Heart right ventricle (tissue), 16 donors: ENCODE measurements at regions of chr2 and their contacts with region 1.

Region 1: GRCh38 chr2:148658807-148659722 is 14.5 kb downstream of the EPC2 start:
- DNase-seq: no peak
- ATAC-seq: peak in 2 of 8 donors; percentile 25 to 45
- H3K4me3 ChIP-seq: no peak overlapping the region
- H3K27ac ChIP-seq: no peak overlapping the region
- H3K4me1 ChIP-seq: peaks cover 2 to 74% (median 55%) of the 10 kb centered on the region in 9 donors
- H3K27me3 ChIP-seq: no peaks in the 10 kb centered on the region
- CTCF ChIP-seq: no peak

Region 2: GRCh38 chr2:148764815-148765214 is 105.8 kb after region 1 on chr2:
- intact Hi-C with region 1: loop called in 2 of 10 experiments (anchors 10 kb)
- DNase-seq: no peak
- ATAC-seq: no peak
- H3K4me3 ChIP-seq: no peak overlapping the region
- H3K27ac ChIP-seq: no peak overlapping the region
- H3K4me1 ChIP-seq: peaks cover 0 to 4% (median 0%) of the 10 kb centered on the region in 9 donors
- H3K27me3 ChIP-seq: no peaks in the 10 kb centered on the region
- CTCF ChIP-seq: no peak

Region 3: DNA sequence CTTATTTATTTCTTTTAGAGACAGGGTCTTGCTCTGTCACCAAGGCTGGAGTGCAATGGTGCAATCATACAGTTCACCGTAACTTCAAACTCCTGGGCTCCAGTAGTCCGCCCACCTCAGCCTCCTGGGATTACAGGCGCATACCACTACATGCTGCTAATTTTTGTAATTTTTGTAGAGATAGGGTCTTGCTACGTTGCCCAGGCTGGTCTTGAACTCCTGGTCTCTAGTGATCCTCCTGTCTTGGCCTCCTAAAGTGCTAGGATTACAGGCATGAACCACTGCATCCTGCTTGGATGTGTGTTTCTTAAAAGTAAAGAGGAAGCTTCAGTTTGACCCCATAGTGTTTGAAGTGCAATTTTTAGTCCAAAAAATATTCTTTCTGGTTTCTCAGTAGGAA is 111.0 kb after region 1 on chr2:
- intact Hi-C with region 1: loop called in 2 of 10 experiments (anchors 10 kb)
- DNase-seq: no peak
- ATAC-seq: no peak
- H3K4me3 ChIP-seq: no peak overlapping the region
- H3K27ac ChIP-seq: no peak overlapping the region
- H3K4me1 ChIP-seq: no peaks in the 10 kb centered on the region
- H3K27me3 ChIP-seq: no peaks in the 10 kb centered on the region
- CTCF ChIP-seq: no peak